ENCODE measurements at regions of chr2 and their contacts with region 1.

Region 1: DNA sequence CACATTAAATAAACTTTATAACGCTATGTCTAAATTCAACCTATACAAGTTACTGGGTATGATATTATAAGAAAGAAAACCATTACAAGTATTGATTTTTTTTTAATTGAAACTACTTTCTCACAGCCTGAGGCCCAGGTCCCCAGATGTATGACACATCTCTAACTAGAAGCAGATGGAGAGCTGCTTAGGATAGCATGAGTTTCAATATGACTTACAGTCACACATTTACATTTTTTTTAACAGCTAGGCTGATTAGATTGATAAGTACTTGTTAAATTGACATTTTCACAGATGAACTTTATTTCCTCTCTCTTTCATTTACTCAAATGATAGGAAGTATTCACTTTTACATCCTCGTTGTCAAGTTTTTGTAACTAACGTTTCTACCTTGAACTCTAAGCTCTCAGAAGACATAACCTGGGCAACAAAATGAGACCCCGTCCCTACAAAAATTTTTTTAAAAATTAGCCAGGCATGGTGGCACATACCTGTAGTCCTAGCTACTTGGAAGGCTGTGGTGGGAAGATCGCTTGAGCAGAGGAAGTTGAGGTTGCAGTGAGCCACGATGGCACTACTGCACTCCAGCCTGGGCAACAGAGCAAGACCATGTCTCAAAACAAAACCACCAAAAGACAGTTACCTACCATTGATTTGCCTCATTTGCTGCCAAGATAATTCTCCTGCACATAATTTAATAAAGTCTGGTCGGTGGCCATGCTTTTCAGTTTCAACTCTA is 52.4 kb downstream of the STK39 start:
- DNase-seq: peak in 3 of 9 donors; percentile 6 to 11 (median 7)
- ATAC-seq: peak; percentile 66
- H3K4me3 ChIP-seq: peak overlapping the region; percentile 14
- H3K4me3 Mint-ChIP-seq: peak overlapping the region; percentile 18 to 78 (median 61)
- H3K27ac ChIP-seq: peak overlapping the region; percentile 14
- H3K27ac Mint-ChIP-seq: peak overlapping the region; percentile 10 to 91 (median 80)
- H3K4me1 ChIP-seq: peaks cover 34 to 50% of the 10 kb centered on the region in 2 donors
- H3K4me1 Mint-ChIP-seq: peaks cover 49 to 90% (median 73%) of the 10 kb centered on the region in 7 donors
- H3K27me3 ChIP-seq: no peaks in the 10 kb centered on the region
- H3K27me3 Mint-ChIP-seq: no peaks in the 10 kb centered on the region

Region 2: DNA sequence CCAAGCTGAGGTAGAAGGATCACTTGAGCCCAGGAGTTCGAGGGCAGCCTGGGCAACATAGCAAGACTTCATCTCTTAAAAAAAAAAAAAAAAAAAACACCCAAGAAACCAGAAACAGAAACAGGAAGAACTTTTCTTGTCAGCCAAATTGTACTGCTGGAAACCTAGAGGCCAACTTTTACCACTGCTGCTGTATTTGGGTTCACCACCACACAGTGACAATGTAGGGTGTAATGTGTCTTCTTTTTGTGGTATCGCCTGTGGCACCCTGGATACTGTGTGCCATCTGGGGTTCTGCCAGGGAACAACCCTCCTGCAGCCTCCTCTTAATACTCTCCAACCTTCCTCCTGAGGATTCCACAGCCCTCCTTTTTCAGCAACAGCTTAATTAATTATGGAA is 20.2 kb before region 1 on chr2:
- CTCF ChIA-PET with region 1: interaction called, 3 read pairs
- POLR2A ChIA-PET with region 1: interaction called, 3 read pairs
- intact Hi-C with region 1: loop called (anchors 1 to 2 kb)
- DNase-seq: peak in 2 of 9 donors; percentile 25
- ATAC-seq: peak; percentile 90
- H3K4me3 ChIP-seq: no peak overlapping the region
- H3K4me3 Mint-ChIP-seq: peak overlapping the region in 8 of 10 donors; percentile 4 to 65 (median 26)
- H3K27ac ChIP-seq: no peak overlapping the region
- H3K27ac Mint-ChIP-seq: peak overlapping the region in 7 of 9 donors; percentile 10 to 88 (median 16)
- H3K4me1 ChIP-seq: peaks cover 13 to 27% of the 10 kb centered on the region in 2 donors
- H3K4me1 Mint-ChIP-seq: peaks cover 38 to 67% (median 55%) of the 10 kb centered on the region in 7 donors
- H3K27me3 ChIP-seq: no peaks in the 10 kb centered on the region
- H3K27me3 Mint-ChIP-seq: no peaks in the 10 kb centered on the region

Region 3: GRCh38 chr2:168210895-168211570 is 16.1 kb after region 1 on chr2:
- CTCF ChIA-PET with region 1: interaction called, 3 read pairs
- POLR2A ChIA-PET with region 1: interaction called, 3 read pairs
- intact Hi-C with region 1: loop called (anchors 2 kb)
- DNase-seq: no peak
- ATAC-seq: peak; percentile 83
- H3K4me3 ChIP-seq: no peak overlapping the region
- H3K4me3 Mint-ChIP-seq: peak overlapping the region in 3 of 10 donors; percentile 6 to 35 (median 7)
- H3K27ac ChIP-seq: no peak overlapping the region
- H3K27ac Mint-ChIP-seq: peak overlapping the region in 1 of 9 donors; percentile 7
- H3K4me1 ChIP-seq: peaks cover 7 to 24% of the 10 kb centered on the region in 2 donors
- H3K4me1 Mint-ChIP-seq: peaks cover 37 to 64% (median 51%) of the 10 kb centered on the region in 7 donors
- H3K27me3 ChIP-seq: no peaks in the 10 kb centered on the region
- H3K27me3 Mint-ChIP-seq: no peaks in the 10 kb centered on the region

Region 4: DNA sequence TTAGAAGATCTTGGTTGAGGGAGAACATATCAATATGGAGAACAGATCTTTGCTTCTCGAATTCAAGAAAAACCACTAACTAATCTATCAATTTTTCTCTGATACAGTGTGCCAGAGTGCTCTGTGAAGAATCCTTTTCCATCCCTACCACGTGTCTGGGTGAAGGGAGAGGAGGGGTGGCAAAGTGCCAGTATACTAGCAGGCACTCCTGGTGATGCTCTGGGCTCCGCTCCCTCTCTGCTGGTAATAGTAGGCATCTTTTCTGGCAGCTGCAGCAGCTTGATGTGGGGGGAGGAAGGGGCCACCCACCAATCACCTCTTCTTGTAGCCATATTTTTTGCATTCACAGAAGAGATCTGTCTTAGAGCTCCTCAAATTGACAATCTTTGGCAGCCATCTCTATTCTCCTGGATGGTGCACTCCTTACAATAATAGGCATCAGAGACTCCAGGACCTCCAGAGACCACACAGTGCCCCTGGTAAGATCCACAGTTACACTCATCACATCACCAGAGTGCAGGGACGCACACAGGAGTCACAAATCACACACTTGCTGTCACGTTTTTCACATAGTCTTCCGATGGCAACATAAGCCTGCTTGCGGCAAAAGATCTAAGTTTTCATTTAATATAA is 36.8 kb after region 1 on chr2:
- CTCF ChIA-PET with region 1: no interaction called
- POLR2A ChIA-PET with region 1: no interaction called
- intact Hi-C with region 1: loop called in 1 of 2 experiments (anchors 5 kb)
- DNase-seq: no peak
- ATAC-seq: no peak
- H3K4me3 ChIP-seq: no peak overlapping the region
- H3K4me3 Mint-ChIP-seq: no peak overlapping the region
- H3K27ac ChIP-seq: no peak overlapping the region
- H3K27ac Mint-ChIP-seq: peak overlapping the region in 1 of 9 donors; percentile 48
- H3K4me1 ChIP-seq: peaks cover 0 to 14% of the 10 kb centered on the region in 2 donors
- H3K4me1 Mint-ChIP-seq: peaks cover 15 to 35% (median 28%) of the 10 kb centered on the region in 7 donors
- H3K27me3 ChIP-seq: no peaks in the 10 kb centered on the region
- H3K27me3 Mint-ChIP-seq: no peaks in the 10 kb centered on the region

Region 5: GRCh38 chr2:169479257-169480078 is 1284.5 kb after region 1 on chr2 and contains the start of gene BBS5:
- CTCF ChIA-PET with region 1: no interaction called
- POLR2A ChIA-PET with region 1: no interaction called
- intact Hi-C with region 1: no loop called
- DNase-seq: peak; percentile 55 to 78 (median 74)
- ATAC-seq: peak; percentile 93
- H3K4me3 ChIP-seq: peak within 1 kb of the TSS; percentile 87
- H3K4me3 Mint-ChIP-seq: peak within 1 kb of the TSS; percentile 89 to 96 (median 92)
- H3K27ac ChIP-seq: peak within 1 kb of the TSS; percentile 49
- H3K27ac Mint-ChIP-seq: peak within 1 kb of the TSS; percentile 37 to 86 (median 69)
- H3K4me1 ChIP-seq: peaks cover 0 to 3% of the 10 kb centered on the region in 2 donors
- H3K4me1 Mint-ChIP-seq: peaks cover 12 to 30% (median 22%) of the 10 kb centered on the region in 7 donors
- H3K27me3 ChIP-seq: no peaks in the 10 kb centered on the region
- H3K27me3 Mint-ChIP-seq: no peaks in the 10 kb centered on the region
- total RNA-seq, gene BBS5: 2.0 to 3.8 (median 2.6) TPM